ENCODE measurements at regions of chr22 and their contacts with region 1.

Region 1: DNA sequence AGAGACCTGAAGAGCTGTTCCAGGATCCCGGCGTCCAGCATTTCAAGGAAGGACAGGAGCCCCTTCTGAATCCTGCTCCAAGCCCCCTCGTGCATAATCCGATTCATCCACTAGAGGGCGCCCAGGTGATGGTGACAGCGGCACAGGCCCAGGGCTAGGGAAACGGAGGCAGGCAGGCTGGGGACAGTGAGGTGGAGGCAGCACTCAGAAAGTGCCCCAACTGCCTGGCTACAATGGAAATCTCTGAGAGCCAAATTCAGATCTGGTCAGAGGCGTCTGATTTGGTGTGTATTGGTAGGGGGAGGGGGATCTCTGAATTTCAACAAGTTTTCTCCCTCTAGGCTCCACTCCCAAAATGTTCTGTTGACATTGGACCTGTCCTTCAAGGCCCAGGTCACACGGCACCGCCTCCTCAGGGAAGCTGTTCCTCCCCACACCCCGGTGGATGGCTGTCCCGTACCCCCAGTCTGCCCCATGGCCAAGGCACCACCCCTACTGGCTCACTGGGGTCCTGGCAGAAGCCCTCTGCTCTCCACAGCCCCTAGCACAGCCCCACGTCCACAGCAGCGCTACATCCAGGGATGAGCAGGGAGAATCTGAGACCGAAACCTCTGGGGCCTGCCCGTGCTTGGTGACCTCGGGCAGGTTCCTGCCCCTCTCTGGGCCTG is 142.9 kb downstream of the CRYBB2 start:
- DNase-seq: no peak
- H3K4me3 ChIP-seq: no peak overlapping the region
- H3K27ac ChIP-seq: no peak overlapping the region
- H3K4me1 ChIP-seq: no peaks in the 10 kb centered on the region
- H3K27me3 ChIP-seq: no peaks in the 10 kb centered on the region
- CTCF ChIP-seq: peak; percentile 85 to 89

Region 2: GRCh38 chr22:25447686-25448434 is 85.5 kb after region 1 on chr22:
- CTCF ChIA-PET with region 1: no interaction called
- dilution Hi-C with region 1: no loop called
- in situ Hi-C with region 1: no loop called
- intact Hi-C with region 1: loop called (anchors 5 kb)
- DNase-seq: peak; percentile 80
- H3K4me3 ChIP-seq: peak overlapping the region; percentile 80 to 93 (median 90)
- H3K27ac ChIP-seq: peak overlapping the region; percentile 82
- H3K4me1 ChIP-seq: peaks cover 21% of the 10 kb centered on the region
- H3K27me3 ChIP-seq: no peaks in the 10 kb centered on the region
- CTCF ChIP-seq: peak; percentile 88 to 94